Naive thymus-derived CD4-positive, alpha-beta T cell (primary cell): ENCODE measurements at regions of chr10 and their contacts with region 1.

Region 1: DNA sequence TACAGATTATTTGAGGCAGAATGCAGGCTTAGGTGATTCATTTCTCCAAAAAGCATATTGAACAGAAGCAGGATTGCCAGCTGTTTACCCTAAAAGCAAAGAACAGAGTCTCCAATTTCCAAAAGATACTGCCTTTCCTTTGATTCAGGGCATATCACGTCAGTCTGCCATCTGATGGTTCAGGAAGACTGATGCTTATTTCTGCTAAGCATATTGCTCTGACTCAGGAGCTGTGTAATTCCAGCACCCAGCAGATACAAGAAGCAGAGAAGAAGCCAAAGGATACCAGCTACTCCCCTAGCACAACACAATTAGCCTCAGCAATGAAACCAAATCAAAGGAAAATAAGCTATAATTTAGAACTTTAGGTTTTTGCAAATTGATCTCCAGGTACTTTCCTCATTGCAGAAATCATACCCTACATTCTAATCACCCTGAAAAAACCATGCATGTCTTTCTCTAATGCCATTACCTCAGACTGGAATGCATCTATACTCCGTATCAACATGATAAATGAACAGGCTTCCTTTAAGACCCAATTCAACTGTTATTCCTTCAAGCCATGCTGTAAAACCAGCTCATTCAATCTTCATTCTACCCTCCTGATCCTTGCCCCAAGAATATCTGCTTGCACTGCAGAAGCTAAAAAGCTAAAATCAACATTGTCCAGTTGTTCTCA is 55.1 kb downstream of the ABI1 start:
- DNase-seq: no peak
- ATAC-seq: peak; percentile 24
- H3K4me3 ChIP-seq: no peak overlapping the region
- H3K4me3 Mint-ChIP-seq: peak overlapping the region in 9 of 10 donors; percentile 0 to 72 (median 60)
- H3K27ac ChIP-seq: no peak overlapping the region
- H3K27ac Mint-ChIP-seq: peak overlapping the region in 3 of 9 donors; percentile 10 to 23 (median 14)
- H3K4me1 ChIP-seq: peaks cover 26 to 29% of the 10 kb centered on the region in 2 donors
- H3K4me1 Mint-ChIP-seq: peaks cover 45 to 92% (median 88%) of the 10 kb centered on the region in 7 donors
- H3K27me3 ChIP-seq: no peaks in the 10 kb centered on the region
- H3K27me3 Mint-ChIP-seq: no peaks in the 10 kb centered on the region

Region 2: GRCh38 chr10:26468700-26469099 is 337.0 kb before region 1 on chr10:
- CTCF ChIA-PET with region 1: no interaction called
- POLR2A ChIA-PET with region 1: no interaction called
- intact Hi-C with region 1: no loop called
- DNase-seq: peak in 8 of 9 donors; percentile 20 to 82 (median 76)
- ATAC-seq: peak; percentile 94
- H3K4me3 ChIP-seq: peak overlapping the region; percentile 1
- H3K4me3 Mint-ChIP-seq: peak overlapping the region; percentile 66 to 93 (median 84)
- H3K27ac ChIP-seq: peak overlapping the region; percentile 33
- H3K27ac Mint-ChIP-seq: peak overlapping the region; percentile 83 to 96 (median 91)
- H3K4me1 ChIP-seq: peaks cover 64 to 76% of the 10 kb centered on the region in 2 donors
- H3K4me1 Mint-ChIP-seq: peaks cover 61 to 100% (median 92%) of the 10 kb centered on the region in 7 donors
- H3K27me3 ChIP-seq: no peaks in the 10 kb centered on the region
- H3K27me3 Mint-ChIP-seq: no peaks in the 10 kb centered on the region

Region 3: GRCh38 chr10:26821699-26822570 is 16.2 kb after region 1 on chr10:
- CTCF ChIA-PET with region 1: no interaction called
- POLR2A ChIA-PET with region 1: no interaction called
- intact Hi-C with region 1: loop called in 1 of 2 experiments (anchors 2 kb)
- DNase-seq: no peak
- ATAC-seq: no peak
- H3K4me3 ChIP-seq: no peak overlapping the region
- H3K4me3 Mint-ChIP-seq: peak overlapping the region in 2 of 10 donors; percentile 6 to 7
- H3K27ac ChIP-seq: no peak overlapping the region
- H3K27ac Mint-ChIP-seq: no peak overlapping the region
- H3K4me1 ChIP-seq: peaks cover 0 to 7% of the 10 kb centered on the region in 2 donors
- H3K4me1 Mint-ChIP-seq: peaks cover 35 to 80% (median 62%) of the 10 kb centered on the region in 7 donors
- H3K27me3 ChIP-seq: no peaks in the 10 kb centered on the region
- H3K27me3 Mint-ChIP-seq: no peaks in the 10 kb centered on the region

Region 4: GRCh38 chr10:26969145-26969926 is 163.6 kb after region 1 on chr10:
- CTCF ChIA-PET with region 1: no interaction called
- POLR2A ChIA-PET with region 1: no interaction called
- intact Hi-C with region 1: no loop called
- DNase-seq: no peak
- ATAC-seq: no peak
- H3K4me3 ChIP-seq: no peak overlapping the region
- H3K4me3 Mint-ChIP-seq: peak overlapping the region in 1 of 10 donors; percentile 28
- H3K27ac ChIP-seq: no peak overlapping the region
- H3K27ac Mint-ChIP-seq: peak overlapping the region in 1 of 9 donors; percentile 67
- H3K4me1 ChIP-seq: no peaks in the 10 kb centered on the region
- H3K4me1 Mint-ChIP-seq: peaks cover 0 to 18% (median 0%) of the 10 kb centered on the region in 7 donors
- H3K27me3 ChIP-seq: no peaks in the 10 kb centered on the region
- H3K27me3 Mint-ChIP-seq: no peaks in the 10 kb centered on the region